B cell (primary cell): ENCODE measurements at regions of chr4 and their contacts with region 1.

Region 1: GRCh38 chr4:77765720-77766119 is 53.4 kb downstream of the CNOT6L start:
- DNase-seq: no peak
- ATAC-seq: no peak
- H3K4me3 ChIP-seq: no peak overlapping the region
- H3K4me3 Mint-ChIP-seq: no peak overlapping the region
- H3K27ac ChIP-seq: no peak overlapping the region
- H3K27ac Mint-ChIP-seq: no peak overlapping the region
- H3K4me1 ChIP-seq: no peaks in the 10 kb centered on the region
- H3K4me1 Mint-ChIP-seq: no peaks in the 10 kb centered on the region
- H3K27me3 ChIP-seq: no peaks in the 10 kb centered on the region
- H3K27me3 Mint-ChIP-seq: no peaks in the 10 kb centered on the region
- CTCF ChIP-seq: no peak

Region 2: GRCh38 chr4:77728420-77728819 is 37.3 kb before region 1 on chr4:
- CTCF ChIA-PET with region 1: no interaction called
- POLR2A ChIA-PET with region 1: no interaction called
- intact Hi-C with region 1: loop called (anchors 5 kb)
- DNase-seq: no peak
- ATAC-seq: no peak
- H3K4me3 ChIP-seq: no peak overlapping the region
- H3K4me3 Mint-ChIP-seq: no peak overlapping the region
- H3K27ac ChIP-seq: no peak overlapping the region
- H3K27ac Mint-ChIP-seq: no peak overlapping the region
- H3K4me1 ChIP-seq: peaks cover 4 to 9% of the 10 kb centered on the region in 2 donors
- H3K4me1 Mint-ChIP-seq: peaks cover 16% of the 10 kb centered on the region
- H3K27me3 ChIP-seq: no peaks in the 10 kb centered on the region
- H3K27me3 Mint-ChIP-seq: no peaks in the 10 kb centered on the region
- CTCF ChIP-seq: no peak

Region 3: DNA sequence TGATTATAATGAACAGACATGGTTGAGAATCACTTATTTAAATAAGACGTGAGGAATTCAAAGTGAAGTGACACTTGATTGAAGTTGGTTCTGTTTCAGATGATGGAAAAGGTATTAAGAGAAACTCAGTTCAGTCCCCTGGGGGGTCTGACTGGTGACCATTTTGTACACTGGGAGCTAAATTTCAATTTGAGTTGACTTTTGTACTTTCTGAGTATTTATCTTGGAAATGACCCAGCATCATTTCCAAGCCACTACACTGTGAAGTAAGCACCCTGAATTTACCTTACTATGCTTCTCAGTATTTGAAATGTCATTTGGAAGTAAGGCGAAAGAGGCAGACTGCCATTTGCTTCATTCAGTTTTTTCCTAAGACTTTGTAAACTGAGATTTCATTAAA is 19.9 kb before region 1 on chr4:
- CTCF ChIA-PET with region 1: no interaction called
- POLR2A ChIA-PET with region 1: no interaction called
- intact Hi-C with region 1: loop called (anchors 2 kb)
- DNase-seq: no peak
- ATAC-seq: no peak
- H3K4me3 ChIP-seq: no peak overlapping the region
- H3K4me3 Mint-ChIP-seq: no peak overlapping the region
- H3K27ac ChIP-seq: no peak overlapping the region
- H3K27ac Mint-ChIP-seq: no peak overlapping the region
- H3K4me1 ChIP-seq: no peaks in the 10 kb centered on the region
- H3K4me1 Mint-ChIP-seq: peaks cover 5% of the 10 kb centered on the region
- H3K27me3 ChIP-seq: no peaks in the 10 kb centered on the region
- H3K27me3 Mint-ChIP-seq: no peaks in the 10 kb centered on the region
- CTCF ChIP-seq: no peak

Region 4: DNA sequence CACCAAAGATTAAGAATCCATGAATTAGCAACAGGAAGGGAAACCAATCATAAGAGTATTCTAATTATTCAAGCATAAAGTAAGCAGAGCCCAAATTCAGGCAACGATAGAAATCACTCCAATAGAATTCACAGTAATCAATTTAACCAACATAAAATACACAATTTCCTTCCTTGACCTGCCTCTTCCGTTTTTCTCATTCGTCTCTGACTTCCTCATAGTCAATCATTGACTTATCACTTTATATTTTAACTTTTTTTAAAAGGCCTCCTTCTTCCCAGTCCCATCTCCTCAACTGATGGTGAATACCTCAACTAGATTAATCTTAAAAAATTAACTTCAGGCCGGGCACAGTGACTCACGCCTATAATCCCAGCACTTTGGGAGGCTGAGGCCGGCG is 40.1 kb after region 1 on chr4:
- CTCF ChIA-PET with region 1: no interaction called
- POLR2A ChIA-PET with region 1: no interaction called
- intact Hi-C with region 1: loop called (anchors 5 kb)
- DNase-seq: no peak
- ATAC-seq: no peak
- H3K4me3 ChIP-seq: no peak overlapping the region
- H3K4me3 Mint-ChIP-seq: no peak overlapping the region
- H3K27ac ChIP-seq: peak overlapping the region in 1 of 2 donors; percentile 10
- H3K27ac Mint-ChIP-seq: no peak overlapping the region
- H3K4me1 ChIP-seq: peaks cover 13 to 19% of the 10 kb centered on the region in 2 donors
- H3K4me1 Mint-ChIP-seq: peaks cover 58% of the 10 kb centered on the region
- H3K27me3 ChIP-seq: no peaks in the 10 kb centered on the region
- H3K27me3 Mint-ChIP-seq: no peaks in the 10 kb centered on the region
- CTCF ChIP-seq: no peak

Region 5: DNA sequence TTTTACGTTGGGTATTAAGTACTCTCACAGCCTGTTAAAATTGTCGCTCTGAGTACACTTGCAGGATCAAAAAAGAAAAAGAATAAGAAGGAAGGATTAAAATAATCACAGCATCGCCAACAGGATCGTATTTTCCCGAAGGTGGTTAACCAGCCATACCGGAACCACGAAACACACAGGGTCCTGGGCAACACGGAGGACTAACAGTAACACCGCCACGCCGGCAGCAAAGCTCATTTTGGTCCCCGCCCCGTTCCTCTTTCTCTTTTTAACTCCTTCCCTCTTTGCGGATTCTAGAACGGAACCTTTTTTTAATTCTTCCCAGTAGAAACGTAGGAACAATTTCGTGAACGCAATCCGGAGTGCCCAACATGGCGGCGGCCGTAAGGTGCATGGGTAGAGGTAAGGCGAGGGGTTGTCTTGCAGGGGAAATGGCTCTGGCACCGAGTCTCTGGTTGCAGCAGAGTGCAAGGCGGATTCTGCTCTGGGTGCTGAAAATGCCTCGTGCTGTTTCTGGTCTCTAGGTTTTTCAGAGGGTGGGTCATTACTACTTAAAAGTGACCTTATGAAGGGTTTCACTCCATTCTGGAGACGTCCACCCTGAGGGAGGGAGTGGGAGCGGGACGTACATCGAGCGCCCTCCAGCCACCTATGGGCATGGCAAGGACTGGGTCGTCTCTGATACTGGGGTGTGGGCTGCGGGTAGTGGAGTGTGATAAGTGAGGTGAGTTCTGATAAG is 96.9 kb after region 1 on chr4 and contains the start of gene MRPL1:
- CTCF ChIA-PET with region 1: no interaction called
- POLR2A ChIA-PET with region 1: interaction called, 11 read pairs
- intact Hi-C with region 1: no loop called
- DNase-seq: peak; percentile 95
- ATAC-seq: peak; percentile 86
- H3K4me3 ChIP-seq: peak within 1 kb of the TSS; percentile 68 to 98 (median 80)
- H3K4me3 Mint-ChIP-seq: peak within 1 kb of the TSS; percentile 99
- H3K27ac ChIP-seq: peak within 1 kb of the TSS; percentile 99 to 100
- H3K27ac Mint-ChIP-seq: peak within 1 kb of the TSS; percentile 98
- H3K4me1 ChIP-seq: peaks cover 17 to 21% of the 10 kb centered on the region in 2 donors
- H3K4me1 Mint-ChIP-seq: peaks cover 41% of the 10 kb centered on the region
- H3K27me3 ChIP-seq: no peaks in the 10 kb centered on the region
- H3K27me3 Mint-ChIP-seq: no peaks in the 10 kb centered on the region
- CTCF ChIP-seq: no peak
- total RNA-seq, gene MRPL1: 22.7 and 23.3 TPM in 2 replicates